Heart left ventricle (tissue), 16 donors: ENCODE measurements at regions of chr5 and their contacts with region 1.

Region 1: GRCh38 chr5:139293504-139294373 is at the start of gene MATR3:
- DNase-seq: peak; percentile 97
- ATAC-seq: peak; percentile 95 to 97 (median 96)
- H3K4me3 ChIP-seq: peak within 1 kb of the TSS; percentile 64 to 98 (median 88)
- H3K27ac ChIP-seq: peak within 1 kb of the TSS; percentile 93 to 100 (median 99)
- H3K4me1 ChIP-seq: peaks cover 8 to 46% (median 38%) of the 10 kb centered on the region in 12 donors
- H3K27me3 ChIP-seq: no peaks in the 10 kb centered on the region
- CTCF ChIP-seq: no peak
- POLR2A ChIP-seq: peak; percentile 42 to 90
- total RNA-seq, gene MATR3: 133 to 208 (median 139) TPM

Region 2: DNA sequence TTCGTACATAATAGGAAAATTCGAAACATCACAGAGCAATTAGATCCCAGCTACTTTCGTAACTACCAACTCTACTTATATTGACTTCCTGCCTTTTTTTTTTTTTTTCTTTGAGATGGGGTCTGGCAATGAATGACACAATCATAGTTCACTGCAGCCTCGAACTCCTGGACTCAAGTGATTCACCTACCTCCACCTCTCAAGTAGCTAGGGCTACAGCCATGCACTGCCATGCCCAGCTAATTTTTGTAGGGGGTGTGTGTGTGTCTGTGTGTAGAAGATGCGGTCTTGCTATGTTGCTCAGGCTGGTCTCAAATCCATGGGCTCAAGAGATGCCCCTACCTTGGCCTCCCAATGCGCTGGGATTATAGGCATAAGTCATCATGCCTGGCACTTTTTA is 42.1 kb after region 1 on chr5:
- intact Hi-C with region 1: loop called in 8 of 10 experiments (anchors 2 to 10 kb)
- DNase-seq: no peak
- ATAC-seq: peak in 2 of 4 donors; percentile 23 to 34
- H3K4me3 ChIP-seq: no peak overlapping the region
- H3K27ac ChIP-seq: no peak overlapping the region
- H3K4me1 ChIP-seq: peaks cover 0 to 3% (median 1%) of the 10 kb centered on the region in 12 donors
- H3K27me3 ChIP-seq: no peaks in the 10 kb centered on the region
- CTCF ChIP-seq: no peak
- POLR2A ChIP-seq: no peak